Astrocyte of the cerebellum (primary cell): ENCODE measurements at regions of chr3 and their contacts with region 1.

Region 1: GRCh38 chr3:52144796-52145735 is 9.2 kb downstream of the POC1A start:
- DNase-seq: no peak
- H3K4me3 ChIP-seq: no peak overlapping the region
- CTCF ChIP-seq: no peak

Region 2: DNA sequence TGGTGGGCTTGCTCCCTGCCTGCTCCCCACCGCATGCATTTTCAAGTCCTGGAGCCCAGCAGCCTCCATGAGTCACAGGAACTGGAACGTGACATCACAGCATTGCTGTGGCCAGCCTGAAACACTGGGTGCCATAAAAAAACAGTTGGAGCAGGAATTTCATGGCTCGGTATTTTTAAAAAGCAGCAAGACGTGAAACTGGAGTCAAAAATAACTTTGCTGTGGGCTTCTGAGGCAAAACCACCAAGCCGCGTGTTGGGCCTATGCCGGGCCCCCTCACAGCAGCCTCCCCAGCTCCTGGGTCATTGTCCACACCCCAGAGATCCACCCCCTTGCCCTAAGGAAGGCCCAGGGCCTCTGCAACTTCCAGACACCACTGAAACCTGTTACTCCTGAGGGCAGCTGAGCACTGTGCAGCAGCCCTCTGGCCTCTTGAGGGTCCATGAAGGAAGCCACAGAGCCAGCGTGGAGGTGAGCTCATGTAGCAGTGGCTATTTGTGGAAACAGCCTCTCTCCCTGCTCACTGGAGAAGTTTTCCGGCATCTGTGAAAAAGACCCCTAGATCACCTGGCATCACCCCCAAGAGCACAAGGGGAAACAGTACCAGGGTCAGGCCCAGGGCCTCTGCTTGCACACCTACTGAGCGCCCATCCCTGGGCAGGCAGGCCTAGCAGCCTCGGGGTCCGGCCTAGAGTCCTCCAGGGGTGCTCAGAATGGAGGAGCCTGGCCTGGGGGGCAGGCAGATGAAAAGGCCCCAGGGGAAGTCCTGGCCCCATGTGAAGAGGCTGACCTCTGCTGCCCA is 54.7 kb before region 1 on chr3:
- in situ Hi-C with region 1: loop called (anchors 5 kb)
- DNase-seq: peak; percentile 96
- H3K4me3 ChIP-seq: no peak overlapping the region
- CTCF ChIP-seq: no peak